CD8-positive, alpha-beta T cell (primary cell): ENCODE measurements at regions of chr9 and their contacts with region 1.

Region 1: GRCh38 chr9:99851500-99851822 is 29.8 kb downstream of the NR4A3 start:
- DNase-seq: peak in 8 of 9 experiments; percentile 5 to 88 (median 43)
- ATAC-seq: peak; percentile 77
- H3K4me3 ChIP-seq: no peak overlapping the region
- H3K4me3 Mint-ChIP-seq: peak overlapping the region; percentile 4
- H3K27ac ChIP-seq: peak overlapping the region in 1 of 2 experiments; percentile 58
- H3K27ac Mint-ChIP-seq: no peak overlapping the region
- H3K4me1 ChIP-seq: peaks cover 19% of the 10 kb centered on the region
- H3K4me1 Mint-ChIP-seq: peaks cover 32% of the 10 kb centered on the region
- H3K27me3 ChIP-seq: no peaks in the 10 kb centered on the region
- H3K27me3 Mint-ChIP-seq: no peaks in the 10 kb centered on the region
- CTCF ChIP-seq: no peak

Region 2: DNA sequence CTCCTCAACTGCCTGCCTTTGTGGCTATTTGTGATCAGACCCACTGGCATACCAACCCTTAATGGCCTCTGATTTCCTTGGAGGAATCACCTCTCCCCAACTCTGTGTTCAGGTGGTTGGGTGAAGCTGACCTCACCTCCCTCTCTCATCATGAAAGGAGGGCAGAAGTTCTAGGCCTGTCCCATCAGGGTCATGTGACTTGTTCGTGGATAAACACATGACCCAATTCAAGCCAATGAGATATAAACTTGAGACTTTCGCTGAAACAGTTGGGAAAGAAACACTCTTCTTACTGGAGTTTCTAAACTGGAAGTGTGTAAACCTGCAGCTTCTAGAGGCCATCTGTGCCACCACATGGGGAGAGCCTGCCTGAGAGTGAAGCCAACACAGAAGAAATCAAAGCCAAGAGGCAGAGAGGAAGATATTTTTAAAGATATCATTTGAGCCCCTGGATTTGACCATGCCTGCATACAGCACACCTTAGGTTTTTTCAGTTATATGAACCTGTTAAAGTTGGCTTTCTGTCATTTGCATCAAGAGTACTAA is 1148.6 kb before region 1 on chr9:
- CTCF ChIA-PET with region 1: no interaction called
- POLR2A ChIA-PET with region 1: no interaction called
- intact Hi-C with region 1: no loop called
- DNase-seq: no peak
- ATAC-seq: no peak
- H3K4me3 ChIP-seq: no peak overlapping the region
- H3K4me3 Mint-ChIP-seq: no peak overlapping the region
- H3K27ac ChIP-seq: no peak overlapping the region
- H3K27ac Mint-ChIP-seq: no peak overlapping the region
- H3K4me1 ChIP-seq: no peaks in the 10 kb centered on the region
- H3K4me1 Mint-ChIP-seq: peaks cover 6% of the 10 kb centered on the region
- H3K27me3 ChIP-seq: no peaks in the 10 kb centered on the region
- H3K27me3 Mint-ChIP-seq: peaks cover 40% of the 10 kb centered on the region
- CTCF ChIP-seq: no peak

Region 3: DNA sequence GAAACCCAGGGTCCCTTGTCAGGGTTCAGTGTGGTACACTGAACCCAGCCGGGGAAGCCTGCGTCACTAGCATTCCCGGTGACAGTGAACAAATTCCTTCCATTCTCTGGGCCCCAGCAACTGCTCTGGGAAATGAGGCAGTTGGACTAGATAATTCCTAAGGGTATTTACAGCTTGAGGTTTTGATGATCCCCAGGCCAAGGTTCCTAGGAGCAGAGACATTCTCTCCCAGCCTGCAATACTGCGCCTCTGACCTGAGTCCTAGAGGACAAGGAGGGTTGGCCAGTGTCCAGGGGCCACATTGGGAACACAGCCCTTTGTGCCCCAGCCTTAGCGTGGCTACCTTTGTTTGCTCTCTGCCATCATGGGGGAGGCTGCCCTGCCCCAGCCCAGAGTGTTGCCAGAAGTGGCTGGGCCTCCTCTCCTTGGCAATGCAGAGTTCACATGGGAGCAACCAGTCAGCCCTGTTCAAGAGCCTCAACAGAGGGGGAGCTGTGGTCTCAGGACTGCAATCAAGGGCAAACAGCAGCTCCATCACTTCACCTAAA is 451.2 kb before region 1 on chr9:
- CTCF ChIA-PET with region 1: no interaction called
- POLR2A ChIA-PET with region 1: no interaction called
- intact Hi-C with region 1: no loop called
- DNase-seq: no peak
- ATAC-seq: no peak
- H3K4me3 ChIP-seq: no peak overlapping the region
- H3K4me3 Mint-ChIP-seq: no peak overlapping the region
- H3K27ac ChIP-seq: no peak overlapping the region
- H3K27ac Mint-ChIP-seq: no peak overlapping the region
- H3K4me1 ChIP-seq: no peaks in the 10 kb centered on the region
- H3K4me1 Mint-ChIP-seq: no peaks in the 10 kb centered on the region
- H3K27me3 ChIP-seq: no peaks in the 10 kb centered on the region
- H3K27me3 Mint-ChIP-seq: peaks cover 2% of the 10 kb centered on the region
- CTCF ChIP-seq: no peak

Region 4: DNA sequence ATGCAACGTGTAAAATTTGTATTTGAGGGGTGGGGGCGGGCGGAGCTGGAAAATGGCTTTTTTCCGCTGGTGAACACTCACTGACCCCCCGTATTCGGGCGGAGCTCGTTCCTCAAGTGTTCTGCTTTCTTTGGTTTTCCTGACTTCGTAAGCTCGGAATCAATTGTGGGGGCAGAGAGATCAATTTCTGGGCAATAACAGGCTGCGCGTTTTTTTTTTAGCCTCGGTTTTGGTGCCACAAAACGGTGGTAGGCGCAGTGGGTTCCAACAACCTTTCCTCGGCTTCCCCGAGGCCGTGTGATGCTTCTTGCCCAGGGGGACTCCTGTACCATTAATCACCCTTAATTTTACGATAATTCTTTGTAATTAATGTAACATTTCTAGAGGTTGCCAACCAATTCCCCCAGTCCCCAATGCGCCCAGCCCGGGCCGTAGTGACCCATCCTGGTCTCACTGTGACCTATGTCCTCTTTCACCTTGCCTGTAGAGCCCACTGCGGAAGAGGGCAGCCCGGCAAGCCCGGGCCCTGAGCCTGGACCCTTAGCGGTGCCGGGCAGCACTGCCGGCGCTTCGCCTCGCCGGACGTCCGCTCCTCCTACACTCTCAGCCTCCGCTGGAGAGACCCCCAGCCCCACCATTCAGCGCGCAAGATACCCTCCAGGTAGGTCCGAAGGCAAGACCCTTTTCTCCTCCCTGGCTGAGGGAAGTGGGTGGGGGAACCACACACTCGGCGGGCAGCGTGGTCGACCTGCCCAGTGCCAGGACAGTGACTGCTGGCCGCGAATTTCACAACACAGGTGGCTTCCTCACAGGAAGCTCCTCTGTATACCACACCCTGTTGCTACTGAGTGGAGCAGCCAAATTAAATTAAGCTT is 26.1 kb before region 1 on chr9:
- CTCF ChIA-PET with region 1: interaction called, 5 read pairs
- POLR2A ChIA-PET with region 1: interaction called, 3 read pairs
- intact Hi-C with region 1: loop called in 1 of 2 experiments (anchors 2 kb)
- DNase-seq: no peak
- ATAC-seq: no peak
- H3K4me3 ChIP-seq: peak overlapping the region; percentile 49 to 77
- H3K4me3 Mint-ChIP-seq: peak overlapping the region; percentile 99
- H3K27ac ChIP-seq: no peak overlapping the region
- H3K27ac Mint-ChIP-seq: no peak overlapping the region
- H3K4me1 ChIP-seq: peaks cover 36% of the 10 kb centered on the region
- H3K4me1 Mint-ChIP-seq: peaks cover 39% of the 10 kb centered on the region
- H3K27me3 ChIP-seq: peaks cover 28 to 49% of the 10 kb centered on the region in 2 experiments
- H3K27me3 Mint-ChIP-seq: peaks cover 63% of the 10 kb centered on the region
- CTCF ChIP-seq: no peak

Region 5: GRCh38 chr9:100281676-100282387 is 430.4 kb after region 1 on chr9:
- CTCF ChIA-PET with region 1: no interaction called
- POLR2A ChIA-PET with region 1: no interaction called
- intact Hi-C with region 1: no loop called
- DNase-seq: no peak
- ATAC-seq: no peak
- H3K4me3 ChIP-seq: no peak overlapping the region
- H3K4me3 Mint-ChIP-seq: no peak overlapping the region
- H3K27ac ChIP-seq: no peak overlapping the region
- H3K27ac Mint-ChIP-seq: peak overlapping the region; percentile 2
- H3K4me1 ChIP-seq: no peaks in the 10 kb centered on the region
- H3K4me1 Mint-ChIP-seq: no peaks in the 10 kb centered on the region
- H3K27me3 ChIP-seq: no peaks in the 10 kb centered on the region
- H3K27me3 Mint-ChIP-seq: no peaks in the 10 kb centered on the region
- CTCF ChIP-seq: no peak